Activated naive CD4-positive, alpha-beta T cell treated with anti-CD3 and anti-CD28 coated beads for 36 hours (primary cell): ENCODE measurements at regions of chr5 and their contacts with region 1.

Region 1: GRCh38 chr5:458547-459353 is 15.8 kb downstream of the EXOC3 start:
- DNase-seq: peak; percentile 87
- H3K4me3 Mint-ChIP-seq: peak overlapping the region; percentile 21
- H3K27ac Mint-ChIP-seq: peak overlapping the region; percentile 94
- H3K4me1 Mint-ChIP-seq: peaks cover 57% of the 10 kb centered on the region
- H3K27me3 Mint-ChIP-seq: no peaks in the 10 kb centered on the region

Region 2: DNA sequence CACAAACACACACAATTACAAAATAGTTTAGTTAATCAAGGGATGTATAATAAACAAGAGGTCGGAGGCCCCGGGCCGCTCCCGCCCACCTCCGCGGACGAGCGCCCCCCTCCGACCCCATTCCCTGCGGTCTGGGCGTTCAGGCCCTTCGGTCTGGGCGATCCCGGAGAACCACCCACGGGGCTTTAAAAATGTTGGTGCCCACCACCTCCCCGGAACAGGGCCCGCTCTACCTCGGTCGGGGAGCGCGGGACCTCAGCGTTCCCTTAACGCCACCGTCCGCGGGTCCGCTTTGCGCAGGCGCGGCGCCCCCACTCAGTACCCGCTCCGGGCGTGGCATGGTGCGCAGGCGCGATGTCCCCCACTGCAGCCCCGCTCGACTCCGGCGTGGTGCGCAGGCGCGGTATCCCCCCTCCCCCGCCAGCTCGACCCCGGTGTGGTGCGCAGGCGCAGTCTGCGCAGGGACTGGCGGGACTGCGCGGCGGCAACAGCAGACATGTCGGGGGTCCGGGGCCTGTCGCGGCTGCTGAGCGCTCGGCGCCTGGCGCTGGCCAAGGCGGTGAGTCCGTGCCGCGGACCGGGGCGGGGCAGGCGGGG is 240.8 kb before region 1 on chr5 and contains the starts of genes CCDC127 and SDHA:
- CTCF ChIA-PET with region 1: no interaction called
- intact Hi-C with region 1: loop called (anchors 5 kb)
- DNase-seq: peak; percentile 94
- H3K4me3 Mint-ChIP-seq: peak within 1 kb of the TSS; percentile 92
- H3K27ac Mint-ChIP-seq: peak within 1 kb of the TSS; percentile 86
- H3K4me1 Mint-ChIP-seq: peaks cover 60% of the 10 kb centered on the region
- H3K27me3 Mint-ChIP-seq: no peaks in the 10 kb centered on the region
- total RNA-seq, gene CCDC127: 3.6 to 4.0 TPM
- total RNA-seq, gene SDHA: 133 to 136 TPM

Region 3: GRCh38 chr5:378976-379742 is 79.6 kb before region 1 on chr5:
- CTCF ChIA-PET with region 1: no interaction called
- intact Hi-C with region 1: loop called (anchors 1 kb)
- DNase-seq: peak; percentile 15
- H3K4me3 Mint-ChIP-seq: peak overlapping the region; percentile 20
- H3K27ac Mint-ChIP-seq: peak overlapping the region; percentile 92
- H3K4me1 Mint-ChIP-seq: peaks cover 50% of the 10 kb centered on the region
- H3K27me3 Mint-ChIP-seq: peaks cover 7% of the 10 kb centered on the region

Region 4: GRCh38 chr5:392431-392988 is 66.2 kb before region 1 on chr5:
- CTCF ChIA-PET with region 1: no interaction called
- intact Hi-C with region 1: loop called (anchors 2 kb)
- DNase-seq: peak; percentile 96
- H3K4me3 Mint-ChIP-seq: peak overlapping the region; percentile 69
- H3K27ac Mint-ChIP-seq: peak overlapping the region; percentile 91
- H3K4me1 Mint-ChIP-seq: peaks cover 27% of the 10 kb centered on the region
- H3K27me3 Mint-ChIP-seq: no peaks in the 10 kb centered on the region

Region 5: GRCh38 chr5:442335-443238 is 16.2 kb before region 1 on chr5 and contains the start of gene EXOC3:
- CTCF ChIA-PET with region 1: interaction called, 27 read pairs
- intact Hi-C with region 1: loop called (anchors 2 kb)
- DNase-seq: peak; percentile 71
- H3K4me3 Mint-ChIP-seq: peak within 1 kb of the TSS; percentile 95
- H3K27ac Mint-ChIP-seq: peak within 1 kb of the TSS; percentile 87
- H3K4me1 Mint-ChIP-seq: peaks cover 29% of the 10 kb centered on the region
- H3K27me3 Mint-ChIP-seq: no peaks in the 10 kb centered on the region
- total RNA-seq, gene EXOC3: 41.6 to 41.7 TPM

Region 6: DNA sequence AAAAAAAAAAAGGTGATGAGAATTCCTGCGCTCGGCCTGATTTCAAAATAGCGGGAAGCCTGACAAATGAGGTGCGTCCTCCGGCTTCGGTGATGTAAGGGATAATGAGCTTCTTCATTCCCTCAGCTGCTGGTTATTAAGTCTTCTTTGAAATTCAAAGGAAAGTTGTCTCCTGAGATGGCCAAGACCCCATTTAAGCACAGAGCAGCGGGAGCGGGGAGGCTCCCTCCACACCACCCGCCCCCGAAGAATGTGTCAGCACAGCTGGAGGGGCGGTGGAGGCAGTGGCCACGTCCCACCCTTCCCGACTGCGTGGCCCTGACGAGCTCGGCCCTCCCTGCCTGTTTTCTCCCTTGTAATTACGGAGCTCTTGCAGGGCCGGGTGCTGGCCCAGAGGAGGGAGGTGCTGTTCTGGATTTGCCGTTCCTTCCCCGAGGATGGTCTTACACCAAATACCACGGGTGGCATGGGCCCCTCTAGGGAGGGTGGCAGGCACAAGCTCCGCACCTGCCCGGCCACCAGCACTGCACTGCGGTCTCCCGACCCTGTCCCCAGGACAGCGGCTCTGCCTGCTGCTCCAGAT is 34.5 kb after region 1 on chr5:
- CTCF ChIA-PET with region 1: no interaction called
- intact Hi-C with region 1: no loop called
- DNase-seq: no peak
- H3K4me3 Mint-ChIP-seq: no peak overlapping the region
- H3K27ac Mint-ChIP-seq: peak overlapping the region; percentile 4
- H3K4me1 Mint-ChIP-seq: no peaks in the 10 kb centered on the region
- H3K27me3 Mint-ChIP-seq: no peaks in the 10 kb centered on the region

Region 7: GRCh38 chr5:892394-893136 is 433.8 kb after region 1 on chr5 and contains the starts of genes BRD9 and TRIP13:
- CTCF ChIA-PET with region 1: no interaction called
- intact Hi-C with region 1: loop called (anchors 5 kb)
- DNase-seq: peak; percentile 86
- H3K4me3 Mint-ChIP-seq: peak within 1 kb of the TSS; percentile 87
- H3K27ac Mint-ChIP-seq: peak within 1 kb of the TSS; percentile 77
- H3K4me1 Mint-ChIP-seq: peaks cover 34% of the 10 kb centered on the region
- H3K27me3 Mint-ChIP-seq: no peaks in the 10 kb centered on the region
- total RNA-seq, gene BRD9: 42.4 to 45.4 TPM
- total RNA-seq, gene TRIP13: 24.0 to 29.9 TPM